Activated CD4-positive, alpha-beta memory T cell treated with anti-CD3 and anti-CD28 coated beads, Interleukin-2, amount 10 ng/mL, durations not matched to agents 7 days and 5 days (primary cell): ENCODE measurements at regions of chr5 and their contacts with region 1.

Region 1: GRCh38 chr5:138035605-138036537 is 3.0 kb upstream of the FAM13B start:
- DNase-seq: peak; percentile 68
- H3K4me3 Mint-ChIP-seq: no peak overlapping the region
- H3K27ac Mint-ChIP-seq: no peak overlapping the region
- H3K4me1 Mint-ChIP-seq: peaks cover 38% of the 10 kb centered on the region
- H3K27me3 Mint-ChIP-seq: no peaks in the 10 kb centered on the region

Region 2: DNA sequence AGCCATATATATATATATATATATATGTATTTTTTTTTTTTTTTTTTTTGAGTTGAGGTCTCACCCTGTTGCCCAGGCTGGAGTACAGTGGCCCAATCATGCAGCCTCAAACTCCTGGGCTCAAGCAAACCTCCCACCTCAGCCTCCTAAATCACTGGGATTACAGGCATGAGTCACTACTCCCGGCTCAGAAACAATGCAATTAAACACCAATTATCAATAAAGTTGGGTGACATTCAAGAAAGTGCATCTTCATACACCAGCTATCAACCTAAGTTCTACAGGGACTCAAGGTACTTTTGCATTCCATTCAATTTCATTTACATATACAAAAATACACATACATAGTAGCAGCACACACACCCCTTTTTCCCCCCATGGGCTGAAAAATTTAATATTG is 10.6 kb before region 1 on chr5:
- CTCF ChIA-PET with region 1: interaction called, 13 read pairs
- POLR2A ChIA-PET with region 1: interaction called, 3 read pairs
- DNase-seq: no peak
- H3K4me3 Mint-ChIP-seq: no peak overlapping the region
- H3K27ac Mint-ChIP-seq: no peak overlapping the region
- H3K4me1 Mint-ChIP-seq: peaks cover 68% of the 10 kb centered on the region
- H3K27me3 Mint-ChIP-seq: no peaks in the 10 kb centered on the region

Region 3: GRCh38 chr5:138065102-138065501 is 29.2 kb after region 1 on chr5:
- CTCF ChIA-PET with region 1: interaction called, 133 read pairs
- POLR2A ChIA-PET with region 1: interaction called, 8 read pairs
- DNase-seq: no peak
- H3K4me3 Mint-ChIP-seq: no peak overlapping the region
- H3K27ac Mint-ChIP-seq: no peak overlapping the region
- H3K4me1 Mint-ChIP-seq: peaks cover 14% of the 10 kb centered on the region
- H3K27me3 Mint-ChIP-seq: no peaks in the 10 kb centered on the region

Region 4: DNA sequence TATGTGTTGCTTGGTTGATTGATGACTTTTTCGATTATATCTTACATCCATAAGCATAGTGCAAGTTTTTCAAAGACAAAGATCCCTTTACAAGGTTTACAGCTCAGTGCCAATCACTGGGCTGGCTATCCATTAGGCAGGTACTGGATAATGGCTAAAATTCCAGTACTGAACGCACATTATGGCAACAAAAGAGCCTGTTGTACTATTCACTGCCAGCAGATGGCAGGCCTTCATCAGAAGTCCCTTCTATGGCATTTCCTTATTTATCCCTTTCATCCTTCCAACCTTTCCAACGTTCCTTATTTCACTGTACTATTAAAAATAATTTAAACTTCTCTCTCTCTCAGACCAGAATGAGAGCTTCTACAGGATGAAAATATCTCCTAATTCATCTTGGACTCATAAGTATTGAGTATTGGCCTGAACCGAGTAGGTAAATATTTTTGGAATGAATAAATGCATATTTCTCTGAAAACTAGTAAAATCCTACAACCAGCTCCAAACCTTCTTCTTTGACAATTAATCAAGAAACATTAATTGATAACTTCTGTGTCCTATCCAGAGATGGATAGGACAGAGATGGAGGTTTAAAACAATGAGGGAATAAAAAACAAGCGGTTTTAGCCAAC is 41.3 kb after region 1 on chr5:
- CTCF ChIA-PET with region 1: interaction called, 15 read pairs
- POLR2A ChIA-PET with region 1: no interaction called
- DNase-seq: peak; percentile 57
- H3K4me3 Mint-ChIP-seq: no peak overlapping the region
- H3K27ac Mint-ChIP-seq: no peak overlapping the region
- H3K4me1 Mint-ChIP-seq: peaks cover 17% of the 10 kb centered on the region
- H3K27me3 Mint-ChIP-seq: peaks cover 6% of the 10 kb centered on the region

Region 5: GRCh38 chr5:138178516-138179276 is 142.8 kb after region 1 on chr5 and contains the starts of genes BRD8 and KIF20A:
- CTCF ChIA-PET with region 1: interaction called, 4 read pairs
- POLR2A ChIA-PET with region 1: interaction called, 16 read pairs
- DNase-seq: peak; percentile 94
- H3K4me3 Mint-ChIP-seq: no peak within 1 kb of the TSS
- H3K27ac Mint-ChIP-seq: no peak within 1 kb of the TSS
- H3K4me1 Mint-ChIP-seq: peaks cover 36% of the 10 kb centered on the region
- H3K27me3 Mint-ChIP-seq: no peaks in the 10 kb centered on the region
- total RNA-seq, gene BRD8: 62.9 to 72.7 TPM
- total RNA-seq, gene KIF20A: 50.7 to 55.7 TPM